ENCODE measurements at regions of chrX and their contacts with region 1.

Region 1: GRCh38 chrX:115038406-115038805 is 21.0 kb upstream of the IL13RA2 start:
- DNase-seq: no peak

Region 2: DNA sequence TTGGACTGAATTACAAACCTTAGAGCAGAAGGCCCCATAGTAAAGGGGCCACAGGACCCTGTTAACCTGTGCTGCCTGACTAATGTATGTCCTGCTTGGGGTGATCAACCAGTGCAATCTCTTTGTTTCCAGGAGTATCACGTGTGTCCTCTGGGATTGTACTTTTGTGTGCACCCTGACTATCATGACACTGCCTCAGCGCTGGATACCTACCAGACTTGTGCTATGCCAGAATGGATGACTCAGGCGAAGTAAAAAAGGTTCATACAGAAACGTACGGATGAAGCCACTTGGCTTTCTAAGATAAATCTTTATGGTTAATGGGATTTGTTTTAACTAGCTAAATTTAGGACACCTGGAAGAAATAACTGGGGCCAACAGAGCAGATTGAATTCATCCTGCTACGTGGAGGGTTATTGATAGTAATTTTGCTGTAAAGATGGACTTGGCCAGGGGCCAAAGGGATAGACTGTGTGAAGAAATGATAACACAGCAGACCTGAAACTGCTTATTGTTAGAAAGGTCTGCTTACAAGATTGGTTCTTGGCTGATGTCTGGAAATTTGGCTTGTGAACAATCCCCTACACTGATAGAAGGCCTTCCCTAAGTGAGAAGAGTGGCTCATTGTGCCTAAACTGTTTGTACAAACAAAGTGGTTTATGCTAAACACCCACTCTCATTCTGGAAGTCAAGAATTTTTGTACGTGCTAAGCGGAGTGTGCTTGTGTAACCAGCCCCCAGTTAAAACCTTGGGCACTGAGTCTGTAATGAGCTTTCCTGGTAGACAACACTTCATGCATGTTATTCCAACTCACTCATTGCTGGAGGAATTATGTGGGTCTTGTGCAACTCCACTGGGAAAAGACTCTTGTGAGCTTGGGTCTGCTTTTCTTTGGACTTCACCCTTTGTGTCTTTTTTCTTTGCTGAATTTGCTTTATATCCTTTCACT is 1205.0 kb before region 1 on chrX:
- intact Hi-C with region 1: no loop called
- DNase-seq: no peak

Region 3: GRCh38 chrX:114619874-114620273 is 418.5 kb before region 1 on chrX:
- intact Hi-C with region 1: no loop called
- DNase-seq: no peak

Region 4: DNA sequence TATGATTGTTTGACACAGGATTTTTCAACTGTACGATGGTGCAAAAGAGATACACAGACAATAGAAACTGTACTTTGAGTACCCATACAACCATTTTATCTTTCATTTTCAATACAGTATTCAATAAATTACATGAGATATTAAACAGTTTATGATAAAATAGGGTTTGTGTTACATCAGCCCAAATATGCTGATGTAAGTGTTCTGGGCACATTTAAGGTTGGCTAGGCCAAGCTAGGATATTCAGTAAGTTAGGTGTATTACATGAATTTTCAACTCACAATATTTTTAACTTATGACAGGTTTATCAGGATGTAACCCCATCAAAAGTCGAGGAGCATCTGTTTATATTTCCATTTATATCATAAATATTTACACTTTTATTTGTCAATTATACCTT is 479.7 kb after region 1 on chrX:
- intact Hi-C with region 1: loop called in 1 of 2 experiments (anchors 5 kb)
- DNase-seq: no peak

Measured in posterior vena cava (tissue), 2 donors.